ENCODE measurements at regions of chr7 and their contacts with region 1.

Region 1: DNA sequence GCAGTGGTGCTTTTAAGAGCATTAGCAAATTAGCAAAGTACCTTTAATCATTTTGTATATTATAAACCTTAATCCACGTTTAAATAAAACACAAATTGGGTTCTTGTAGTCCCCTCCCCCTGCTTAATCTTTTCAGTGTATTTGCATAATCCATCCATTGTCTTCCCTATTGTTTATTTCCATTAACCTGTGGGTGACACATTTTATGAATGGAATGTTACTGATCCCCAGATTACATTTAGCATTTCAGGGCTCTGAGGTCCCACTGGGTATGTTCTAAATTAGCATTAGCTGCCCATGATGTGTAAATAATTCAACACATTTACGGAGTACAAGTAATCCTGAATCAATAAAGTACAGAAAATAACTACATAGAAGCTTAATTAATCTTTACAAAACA is 138.4 kb upstream of the FEZF1 start:
- DNase-seq: no peak
- H3K4me3 ChIP-seq: no peak overlapping the region
- H3K27ac ChIP-seq: no peak overlapping the region
- H3K4me1 ChIP-seq: no peaks in the 10 kb centered on the region
- H3K27me3 ChIP-seq: no peaks in the 10 kb centered on the region
- CTCF ChIP-seq: no peak

Region 2: DNA sequence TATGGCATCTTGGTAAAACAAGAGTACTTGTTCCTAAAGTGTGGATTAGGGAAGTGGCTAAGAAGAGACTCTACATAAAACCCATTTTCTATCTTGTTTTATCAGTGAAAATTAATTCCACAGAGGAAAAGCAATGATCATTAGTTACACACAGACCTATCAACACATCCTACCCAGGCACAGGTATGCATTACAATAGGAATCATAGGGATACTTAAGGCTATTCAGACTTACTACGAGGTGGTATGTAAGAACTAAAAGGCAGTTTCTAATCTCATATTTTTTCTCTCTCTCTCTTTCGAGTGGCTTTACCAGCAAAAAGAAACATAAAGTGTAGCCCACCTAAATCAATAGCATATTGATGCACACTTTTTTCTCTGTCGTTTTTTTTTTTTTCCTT is 27.9 kb after region 1 on chr7:
- CTCF ChIA-PET with region 1: no interaction called
- POLR2A ChIA-PET with region 1: no interaction called
- intact Hi-C with region 1: loop called (anchors 5 kb)
- DNase-seq: no peak
- H3K4me3 ChIP-seq: no peak overlapping the region
- H3K27ac ChIP-seq: no peak overlapping the region
- H3K4me1 ChIP-seq: no peaks in the 10 kb centered on the region
- H3K27me3 ChIP-seq: no peaks in the 10 kb centered on the region
- CTCF ChIP-seq: no peak

Region 3: GRCh38 chr7:122833888-122834570 is 391.1 kb after region 1 on chr7:
- CTCF ChIA-PET with region 1: no interaction called
- POLR2A ChIA-PET with region 1: no interaction called
- intact Hi-C with region 1: no loop called
- DNase-seq: no peak
- H3K4me3 ChIP-seq: 0 out of 2 replicates have a peak overlapping the region, but pooled peaks have one; percentile 7
- H3K27ac ChIP-seq: no peak overlapping the region
- H3K4me1 ChIP-seq: no peaks in the 10 kb centered on the region
- H3K27me3 ChIP-seq: no peaks in the 10 kb centered on the region
- CTCF ChIP-seq: no peak